A549 (cell line): ENCODE measurements at regions of chr2 and their contacts with region 1.

Region 1: GRCh38 chr2:3738454-3738853 is 35.1 kb downstream of the DCDC2C start:
- DNase-seq: peak; percentile 63 to 75
- ATAC-seq: peak; percentile 93 to 94
- H3K4me3 ChIP-seq: no peak overlapping the region
- H3K27ac ChIP-seq: no peak overlapping the region
- H3K4me1 ChIP-seq: no peaks in the 10 kb centered on the region
- CTCF ChIP-seq: peak; percentile 54
- EP300 ChIP-seq: no peak
- POLR2A ChIP-seq: no peak
- RAD21 ChIP-seq: peak; percentile 49 to 76; a peak in 3 of 5 replicates

Region 2: GRCh38 chr2:3762771-3763447 is 24.5 kb after region 1 on chr2:
- CTCF ChIA-PET with region 1: no interaction called
- POLR2A ChIA-PET with region 1: no interaction called
- DNase-seq: no peak
- ATAC-seq: no peak; a peak in 1 of 6 replicates
- H3K4me3 ChIP-seq: no peak overlapping the region
- H3K27ac ChIP-seq: no peak overlapping the region
- H3K4me1 ChIP-seq: no peaks in the 10 kb centered on the region
- CTCF ChIP-seq: no peak
- EP300 ChIP-seq: no peak
- POLR2A ChIP-seq: no peak
- RAD21 ChIP-seq: no peak

Region 3: DNA sequence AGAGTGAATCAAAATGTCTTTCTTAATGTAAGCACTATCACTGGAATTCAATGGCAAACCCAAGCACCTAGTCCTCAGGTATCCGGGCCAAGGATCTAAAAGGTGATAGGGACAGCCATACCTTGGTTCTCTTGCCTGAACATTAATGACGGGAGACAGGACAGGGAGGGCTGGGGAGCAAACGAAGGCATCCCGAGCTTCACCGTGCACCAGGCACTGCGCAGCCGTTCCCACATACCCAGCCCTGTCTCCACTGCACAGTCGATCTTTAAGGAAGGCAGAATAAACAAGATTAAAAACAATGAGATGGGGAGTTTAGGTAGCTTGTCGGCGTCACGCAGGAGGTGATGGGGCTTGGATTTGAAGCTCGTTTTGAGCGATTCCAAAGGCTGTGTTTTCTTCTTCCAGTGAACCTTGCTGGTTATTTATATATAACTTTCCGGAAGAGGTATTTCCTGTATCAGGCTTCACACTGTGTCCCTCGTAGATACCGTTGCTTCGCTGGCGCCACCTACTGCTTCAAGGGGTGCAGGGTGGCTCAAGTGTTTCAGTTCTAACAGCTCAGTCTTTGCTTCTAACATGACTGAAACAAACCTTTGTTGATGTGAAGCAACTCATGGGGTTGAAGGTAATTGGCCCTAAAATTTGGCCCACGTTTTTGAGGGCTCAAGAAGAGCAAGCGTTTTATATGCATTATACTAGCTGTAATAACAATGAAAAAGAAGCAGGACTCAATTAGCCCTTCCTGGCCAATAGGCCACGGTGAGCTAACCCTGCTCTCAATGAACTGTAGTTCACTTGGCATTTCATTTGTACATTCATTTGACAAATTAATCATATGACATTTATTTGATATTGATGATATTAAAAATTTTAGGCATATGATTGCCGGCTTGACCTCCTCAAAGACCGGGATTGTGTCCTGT is 42.3 kb after region 1 on chr2:
- CTCF ChIA-PET with region 1: interaction called, 15 read pairs
- POLR2A ChIA-PET with region 1: no interaction called
- DNase-seq: peak; percentile 71 to 76
- ATAC-seq: peak; percentile 79 to 96
- H3K4me3 ChIP-seq: no peak overlapping the region
- H3K27ac ChIP-seq: no peak overlapping the region
- H3K4me1 ChIP-seq: 0 out of 3 replicates have a peak, but pooled peaks cover 4% of the 10 kb centered on the region
- CTCF ChIP-seq: peak; percentile 63
- EP300 ChIP-seq: no peak
- POLR2A ChIP-seq: no peak
- RAD21 ChIP-seq: peak; percentile 36 to 66; a peak in 2 of 5 replicates

Region 4: DNA sequence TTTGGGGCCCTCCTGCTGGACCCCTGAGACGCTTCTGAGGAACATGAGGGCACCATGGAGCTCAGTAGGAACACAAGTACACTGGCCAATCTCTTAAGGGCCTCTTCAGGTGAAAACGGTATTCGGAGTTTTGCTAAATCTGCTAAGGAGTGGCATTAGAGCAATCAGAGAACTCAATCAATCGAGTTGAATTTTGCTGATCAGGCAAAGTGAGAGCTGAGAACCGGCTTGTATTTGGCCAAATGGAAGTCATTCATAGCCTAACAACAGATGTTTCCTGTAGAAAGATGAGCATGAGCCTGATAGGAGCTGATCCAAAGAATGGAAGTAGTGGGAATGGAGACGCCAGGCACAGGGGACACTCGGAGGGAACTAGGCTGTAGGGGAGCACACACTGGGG is 98.6 kb after region 1 on chr2:
- CTCF ChIA-PET with region 1: no interaction called
- POLR2A ChIA-PET with region 1: no interaction called
- DNase-seq: no peak
- ATAC-seq: no peak
- H3K4me3 ChIP-seq: no peak overlapping the region
- H3K27ac ChIP-seq: no peak overlapping the region
- H3K4me1 ChIP-seq: no peaks in the 10 kb centered on the region
- CTCF ChIP-seq: no peak
- EP300 ChIP-seq: no peak
- POLR2A ChIP-seq: no peak
- RAD21 ChIP-seq: no peak